Motor neuron (in vitro differentiated cells): ENCODE measurements at regions of chr22 and their contacts with region 1.

Region 1: GRCh38 chr22:40055143-40055883 is 60.6 kb downstream of the FAM83F start:
- ATAC-seq: no peak
- H3K4me3 ChIP-seq: no peak overlapping the region
- H3K27ac ChIP-seq: no peak overlapping the region
- H3K4me1 ChIP-seq: peaks cover 0 to 5% of the 10 kb centered on the region in 2 donors

Region 2: GRCh38 chr22:39967103-39967829 is 88.0 kb before region 1 on chr22:
- in situ Hi-C with region 1: no loop called
- ATAC-seq: no peak
- H3K4me3 ChIP-seq: no peak overlapping the region
- H3K27ac ChIP-seq: no peak overlapping the region
- H3K4me1 ChIP-seq: peaks cover 0 to 4% of the 10 kb centered on the region in 2 donors

Region 3: GRCh38 chr22:40156001-40156516 is 100.7 kb after region 1 on chr22:
- in situ Hi-C with region 1: loop called in 1 of 9 experiments (anchors 25 kb)
- ATAC-seq: peak in 4 of 8 experiments; percentile 35 to 73 (median 68)
- H3K4me3 ChIP-seq: no peak overlapping the region
- H3K27ac ChIP-seq: no peak overlapping the region
- H3K4me1 ChIP-seq: peaks cover 0 to 14% of the 10 kb centered on the region in 2 donors